Breast epithelium (tissue), 4 donors: ENCODE measurements at regions of chr20 and their contacts with region 1.

Region 1: DNA sequence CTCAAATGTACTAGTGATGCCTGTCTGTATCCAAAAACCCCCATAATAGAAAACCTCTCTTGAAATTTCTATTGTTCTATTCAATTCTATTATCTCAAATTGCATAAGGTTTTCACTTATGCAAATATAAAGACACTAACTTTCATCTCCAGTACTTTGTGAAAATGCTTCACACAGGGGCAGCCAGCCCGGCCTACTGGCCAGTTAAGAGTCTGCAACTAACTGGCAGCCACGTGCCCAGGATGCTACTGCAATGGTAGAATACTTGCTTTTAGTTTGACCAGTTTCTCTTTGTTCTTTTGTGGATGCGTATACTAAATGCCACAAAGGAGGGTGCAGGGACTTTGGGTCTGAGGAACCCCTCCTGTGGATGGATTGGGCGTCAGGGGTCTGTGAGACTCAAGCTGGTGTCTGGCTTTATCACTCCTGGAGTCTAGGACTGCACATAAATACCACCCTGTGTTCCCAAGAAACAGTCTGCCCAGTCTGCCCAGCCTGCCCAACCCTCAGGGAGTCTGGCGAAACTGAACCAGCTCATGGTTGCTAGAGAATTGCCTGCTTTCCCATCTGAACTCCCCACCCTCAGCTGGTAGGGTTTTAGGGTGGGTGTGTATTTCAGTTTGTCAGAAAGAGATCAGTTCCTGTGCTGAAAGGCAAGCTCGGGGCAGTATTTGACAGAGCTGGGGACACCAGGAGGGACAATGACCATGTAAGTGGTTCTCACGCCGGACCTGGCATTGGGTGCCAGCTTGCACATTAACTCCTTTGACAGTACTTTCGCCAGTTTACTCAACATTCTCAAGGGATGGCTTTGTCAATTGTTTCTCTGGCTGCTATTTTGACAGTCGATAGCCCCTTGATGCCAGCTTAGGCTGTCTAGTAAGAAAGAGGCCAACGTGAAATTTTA is 558.2 kb upstream of the JAG1 start:
- DNase-seq: no peak
- H3K4me3 ChIP-seq: no peak overlapping the region
- H3K27ac ChIP-seq: no peak overlapping the region
- H3K4me1 ChIP-seq: no peaks in the 10 kb centered on the region
- H3K27me3 ChIP-seq: no peaks in the 10 kb centered on the region
- CTCF ChIP-seq: no peak
- POLR2A ChIP-seq: no peak

Region 2: GRCh38 chr20:11255860-11256259 is 23.9 kb after region 1 on chr20:
- intact Hi-C with region 1: loop called (anchors 2 kb)
- DNase-seq: no peak
- H3K4me3 ChIP-seq: no peak overlapping the region
- H3K27ac ChIP-seq: no peak overlapping the region
- H3K4me1 ChIP-seq: no peaks in the 10 kb centered on the region
- H3K27me3 ChIP-seq: no peaks in the 10 kb centered on the region
- CTCF ChIP-seq: no peak
- POLR2A ChIP-seq: no peak

Region 3: GRCh38 chr20:11261533-11262000 is 29.6 kb after region 1 on chr20:
- intact Hi-C with region 1: loop called (anchors 2 kb)
- DNase-seq: no peak
- H3K4me3 ChIP-seq: no peak overlapping the region
- H3K27ac ChIP-seq: peak overlapping the region in 1 of 2 donors; percentile 51
- H3K4me1 ChIP-seq: no peaks in the 10 kb centered on the region
- H3K27me3 ChIP-seq: no peaks in the 10 kb centered on the region
- CTCF ChIP-seq: no peak
- POLR2A ChIP-seq: no peak

Region 4: DNA sequence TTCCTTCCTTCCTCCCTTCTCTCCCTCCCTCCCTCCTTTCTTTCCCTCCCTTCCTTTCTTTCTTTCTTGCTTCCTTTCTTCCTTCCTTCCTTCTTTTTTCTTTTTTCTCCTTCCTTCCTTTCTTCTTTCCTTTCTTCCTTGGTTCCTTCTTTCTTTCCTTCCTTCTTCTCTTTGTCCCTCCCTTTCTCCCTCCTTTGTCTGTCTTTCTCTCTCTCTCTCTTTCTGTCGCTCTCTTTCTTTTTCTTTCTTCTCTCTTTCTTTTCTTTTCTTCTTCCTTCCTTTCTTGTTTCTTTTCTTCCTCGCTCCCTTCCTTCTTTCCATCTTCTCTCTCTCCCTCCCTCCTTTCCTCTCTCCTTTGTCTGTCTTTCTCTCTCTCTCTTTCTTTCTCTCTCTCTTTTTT is 43.7 kb after region 1 on chr20:
- intact Hi-C with region 1: no loop called
- DNase-seq: no peak
- H3K4me3 ChIP-seq: no peak overlapping the region
- H3K27ac ChIP-seq: no peak overlapping the region
- H3K4me1 ChIP-seq: no peaks in the 10 kb centered on the region
- H3K27me3 ChIP-seq: no peaks in the 10 kb centered on the region
- CTCF ChIP-seq: no peak
- POLR2A ChIP-seq: no peak

Region 5: DNA sequence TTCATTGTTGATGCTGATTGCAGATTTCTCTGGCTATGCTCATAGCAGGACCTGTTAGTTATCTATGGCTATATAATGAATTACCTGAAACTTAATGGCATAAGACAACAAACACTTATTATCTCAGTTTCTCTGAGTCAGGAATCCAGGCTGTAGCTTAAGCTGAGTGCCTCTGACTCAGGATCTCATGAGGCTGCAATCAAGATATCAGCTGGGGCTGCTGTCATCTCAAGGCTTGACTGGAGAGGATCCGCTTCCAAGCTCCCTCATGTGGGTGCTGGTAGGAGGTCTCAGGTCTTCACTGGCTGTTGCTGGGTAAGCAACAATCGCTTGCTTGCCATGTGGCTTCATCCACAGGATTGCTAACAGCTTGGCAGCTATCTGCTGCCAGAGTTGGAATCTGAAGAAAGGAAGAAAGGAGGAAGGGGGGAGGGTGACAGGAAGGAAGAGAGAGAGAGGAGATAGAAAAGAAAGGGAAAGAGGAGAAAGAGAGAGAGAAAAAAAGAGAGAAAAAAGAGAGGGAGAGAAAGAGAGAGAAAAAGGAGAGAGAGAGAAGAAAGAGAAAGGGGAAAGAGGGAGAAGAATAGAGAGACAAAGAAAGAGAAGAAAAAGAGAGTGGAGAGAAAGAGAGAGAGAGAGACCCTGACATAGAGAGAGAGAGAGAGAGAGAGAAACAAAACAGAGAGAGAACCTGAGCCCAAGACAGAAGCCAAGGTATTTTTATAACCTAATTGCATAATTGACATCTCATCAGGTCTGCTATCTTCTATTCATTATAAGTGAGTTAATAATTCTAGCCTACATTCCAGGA is 106.7 kb after region 1 on chr20:
- intact Hi-C with region 1: no loop called
- DNase-seq: no peak
- H3K4me3 ChIP-seq: no peak overlapping the region
- H3K27ac ChIP-seq: no peak overlapping the region
- H3K4me1 ChIP-seq: no peaks in the 10 kb centered on the region
- H3K27me3 ChIP-seq: no peaks in the 10 kb centered on the region
- CTCF ChIP-seq: no peak
- POLR2A ChIP-seq: no peak